ENCODE measurements at regions of chr6 and their contacts with region 1.

Region 1: DNA sequence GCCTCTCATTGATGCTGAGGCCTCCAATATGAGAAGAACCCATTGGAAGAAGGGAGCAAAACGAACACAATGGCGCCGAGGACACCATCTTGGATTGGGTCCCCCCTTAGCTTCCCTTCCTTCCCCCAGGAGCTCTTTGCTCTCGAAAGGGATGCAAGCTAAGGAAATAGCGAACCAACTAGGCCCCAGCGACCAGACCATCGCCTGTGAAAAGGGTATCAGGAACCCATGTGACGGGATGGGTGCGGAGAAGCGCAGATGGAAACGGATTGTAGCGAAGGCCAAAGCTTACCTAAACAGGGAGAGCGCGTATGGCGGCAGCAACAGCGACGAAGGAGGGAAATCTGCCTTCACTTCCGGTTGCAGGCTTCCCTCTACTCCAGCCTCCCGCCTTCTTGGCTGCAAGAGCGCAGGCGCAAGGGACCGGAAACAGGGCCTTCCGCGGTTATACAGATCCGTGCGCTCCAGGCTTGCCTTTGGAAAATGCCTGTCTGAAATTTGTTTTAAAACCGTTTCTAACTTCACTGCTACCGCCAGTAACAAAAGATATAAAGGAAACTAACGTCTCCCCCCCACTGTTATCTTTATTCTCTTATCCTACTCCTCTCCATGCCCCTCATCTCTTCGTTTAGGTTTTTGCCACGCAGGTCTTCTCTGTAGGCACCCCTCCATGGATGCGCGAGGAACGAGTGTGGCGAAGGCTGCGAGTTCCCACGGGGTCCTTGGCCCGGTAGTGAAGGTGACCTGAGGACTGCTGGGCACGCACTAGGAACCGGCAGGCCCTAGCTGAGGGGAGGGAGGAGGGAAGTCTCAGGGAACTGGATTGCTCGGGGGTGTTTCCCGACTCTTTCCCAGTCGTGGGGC is at the start of gene DDX39B:
- DNase-seq: peak; percentile 93 to 99 (median 96)

Region 2: GRCh38 chr6:31575335-31575901 is 33.5 kb after region 1 on chr6 and contains the start of gene TNF:
- intact Hi-C with region 1: no loop called
- DNase-seq: peak in 4 of 10 donors; percentile 28 to 87 (median 32)

Region 3: GRCh38 chr6:31664790-31665500 is 123.1 kb after region 1 on chr6 and contains the start of gene GPANK1:
- intact Hi-C with region 1: loop called (anchors 5 kb)
- DNase-seq: peak; percentile 82 to 98 (median 90)

Region 4: DNA sequence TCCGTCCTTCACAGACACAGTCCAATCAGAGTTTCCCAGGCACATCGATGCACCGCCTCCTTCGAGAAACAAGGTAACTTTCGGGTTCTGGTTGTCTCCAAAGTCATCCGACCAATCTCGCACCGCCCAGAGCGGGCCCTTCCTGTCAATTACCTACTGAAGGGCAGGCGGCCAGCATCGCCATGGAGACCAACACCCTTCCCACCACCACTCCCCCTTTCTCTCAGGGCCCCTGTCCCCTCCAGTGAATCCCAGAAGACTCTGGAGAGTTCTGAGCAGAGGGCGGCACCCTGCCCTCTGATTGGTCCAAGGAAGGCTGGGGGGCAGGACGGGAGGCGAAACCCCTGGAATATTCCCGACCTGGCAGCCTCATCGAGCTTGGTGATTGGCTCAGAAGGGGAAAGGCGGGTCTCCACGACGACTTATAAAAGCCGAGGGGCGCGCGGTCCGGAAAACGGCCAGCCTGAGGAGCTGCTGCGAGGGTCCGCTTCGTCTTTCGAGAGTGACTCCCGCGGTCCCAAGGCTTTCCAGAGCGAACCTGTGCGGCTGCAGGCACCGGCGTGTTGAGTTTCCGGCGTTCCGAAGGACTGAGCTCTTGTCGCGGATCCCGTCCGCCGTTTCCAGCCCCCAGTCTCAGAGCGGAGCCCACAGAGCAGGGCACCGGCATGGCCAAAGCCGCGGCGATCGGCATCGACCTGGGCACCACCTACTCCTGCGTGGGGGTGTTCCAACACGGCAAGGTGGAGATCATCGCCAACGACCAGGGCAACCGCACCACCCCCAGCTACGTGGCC is 285.6 kb after region 1 on chr6 and contains the start of gene HSPA1B:
- intact Hi-C with region 1: no loop called
- DNase-seq: peak; percentile 95 to 100 (median 98)

Region 5: DNA sequence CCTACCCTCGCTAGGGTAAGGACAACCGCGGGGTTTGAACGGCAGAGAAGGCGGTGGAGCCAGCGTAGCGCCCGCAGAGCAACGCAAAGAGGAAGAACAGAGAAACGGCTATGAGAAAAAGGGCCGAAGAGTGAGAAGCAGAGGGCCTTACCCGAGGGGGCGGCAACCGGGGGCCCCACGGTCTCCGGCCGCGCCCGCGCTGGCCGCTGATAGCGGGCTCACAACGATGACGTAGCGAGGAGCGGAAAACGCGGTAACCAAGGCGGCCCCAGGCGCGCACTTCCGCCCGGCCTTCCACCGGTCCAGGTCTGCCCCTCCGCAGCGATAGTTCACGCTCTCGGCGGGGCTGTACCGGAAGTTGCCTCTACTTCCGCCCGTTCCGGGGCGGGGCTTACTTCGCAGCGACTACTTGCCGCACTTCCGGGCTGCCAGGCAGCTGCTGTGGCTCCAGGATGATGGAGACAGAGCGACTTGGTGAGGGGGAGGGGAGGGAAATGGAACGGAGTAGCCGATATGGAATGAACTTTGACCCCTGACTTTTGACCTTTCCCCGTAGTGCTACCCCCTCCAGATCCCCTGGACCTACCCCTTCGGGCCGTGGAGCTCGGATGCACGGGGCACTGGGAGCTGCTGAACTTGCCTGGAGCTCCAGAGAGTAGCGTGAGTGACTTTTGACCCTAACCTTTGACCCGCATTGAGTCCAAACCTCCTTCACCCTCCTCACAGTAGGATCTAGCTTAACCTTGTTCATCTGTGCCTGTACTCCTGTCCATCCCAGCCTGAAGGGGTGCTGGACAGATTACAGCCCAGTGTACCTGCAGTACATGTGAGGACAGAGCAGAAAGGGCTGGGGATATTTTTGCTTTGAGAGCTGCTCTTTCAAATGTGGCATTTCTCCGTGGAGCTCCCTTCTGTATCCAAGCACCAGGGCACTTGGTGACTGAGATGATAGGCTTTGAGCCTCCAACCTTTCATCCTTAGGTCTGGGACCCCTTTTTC is 417.1 kb after region 1 on chr6 and contains the starts of genes NELFE and SKIC2:
- intact Hi-C with region 1: loop called (anchors 10 kb)
- DNase-seq: peak; percentile 98 to 100 (median 99)

Region 6: DNA sequence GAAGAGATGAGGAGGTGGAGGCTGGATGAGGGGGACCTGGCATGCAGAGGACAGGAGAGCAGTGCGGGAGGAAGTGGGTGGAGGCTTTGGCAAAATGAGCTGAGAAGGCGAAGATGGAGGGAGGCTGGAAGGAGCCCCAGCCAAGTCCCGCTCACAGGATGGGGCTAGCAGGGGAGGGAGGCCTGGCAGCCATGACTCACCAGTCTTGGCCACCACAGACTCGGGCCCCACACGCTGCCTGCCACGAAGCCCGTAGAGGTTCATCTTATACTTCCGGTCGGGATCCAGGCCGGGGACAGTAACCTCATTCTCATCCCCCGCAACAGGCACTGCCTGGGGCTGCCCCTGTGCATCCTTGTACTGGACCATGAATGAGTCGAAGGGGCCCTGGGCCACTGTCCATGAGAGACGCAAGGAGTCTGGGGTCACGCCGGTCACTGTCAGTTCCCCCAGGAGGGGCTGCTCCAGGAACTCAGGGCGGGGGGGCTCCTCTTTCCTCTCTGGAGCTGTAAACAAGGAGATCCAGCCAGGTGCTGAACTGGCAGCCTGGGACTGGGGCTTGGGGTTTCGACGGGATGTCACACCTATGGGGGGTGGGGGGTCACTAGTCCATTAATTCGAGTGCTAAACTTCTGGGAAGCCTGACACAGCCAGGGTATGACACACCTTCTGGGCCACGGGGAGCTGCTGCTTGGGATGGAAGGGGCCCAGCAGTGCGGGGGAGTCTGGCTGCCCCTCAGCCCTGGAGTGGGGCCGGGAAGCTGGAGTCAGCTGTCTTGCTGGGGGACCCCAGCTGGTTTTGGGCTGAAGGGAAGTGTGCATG is 539.5 kb after region 1 on chr6:
- intact Hi-C with region 1: no loop called
- DNase-seq: peak in 8 of 10 donors; percentile 25 to 90 (median 58)

Measured in posterior cingulate gyrus (tissue), 11 donors.